ENCODE measurements at regions of chr12 and their contacts with region 1.

Region 1: DNA sequence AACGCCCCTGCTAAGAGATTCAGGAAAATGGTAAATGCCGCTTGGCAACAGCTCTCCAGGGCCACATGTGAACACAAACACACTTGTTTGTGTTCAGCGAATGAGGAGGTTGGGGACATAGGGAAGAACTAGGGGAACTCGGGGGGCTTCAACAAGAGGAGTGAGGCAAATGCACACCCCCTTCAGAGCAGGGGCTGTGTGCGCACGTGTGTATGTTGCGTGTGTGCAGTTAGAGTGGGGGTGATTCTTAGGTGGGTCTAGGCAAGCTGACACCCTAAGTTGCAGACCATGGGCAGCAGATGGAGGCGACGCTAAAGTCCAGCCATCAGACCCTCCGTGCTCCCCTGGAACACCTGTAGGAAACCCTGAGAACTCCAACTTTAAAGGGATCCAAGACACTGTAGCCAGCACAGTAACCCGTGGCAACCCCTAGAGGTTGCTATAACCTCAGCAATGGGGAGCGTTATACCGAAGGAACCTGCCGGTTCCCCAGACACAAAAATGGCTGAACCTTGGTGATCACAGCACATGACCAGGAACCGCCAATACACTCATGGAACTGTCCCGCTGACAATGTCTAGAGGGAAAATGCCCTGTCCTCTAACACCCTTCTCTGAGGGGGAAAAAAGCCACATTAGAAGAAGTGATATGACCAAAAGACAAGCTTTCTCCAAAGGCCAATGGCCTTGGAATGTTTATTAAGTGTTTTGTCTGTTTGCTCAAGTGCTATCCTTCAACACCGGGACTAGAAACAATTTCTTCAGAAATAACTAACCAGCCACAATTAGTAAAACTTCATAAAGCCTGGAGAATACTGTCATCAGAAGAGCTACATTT is 86.5 kb upstream of the CEP83 start:
- DNase-seq: peak in 1 of 3 donors; percentile 36
- ATAC-seq: peak; percentile 91 to 97
- H3K4me3 ChIP-seq: no peak overlapping the region
- H3K27ac ChIP-seq: no peak overlapping the region
- H3K4me1 ChIP-seq: no peaks in the 10 kb centered on the region
- H3K27me3 ChIP-seq: no peaks in the 10 kb centered on the region

Region 2: GRCh38 chr12:94603434-94604365 is 57.5 kb after region 1 on chr12:
- intact Hi-C with region 1: no loop called
- DNase-seq: peak; percentile 25 to 55 (median 50)
- ATAC-seq: peak in 1 of 2 donors; percentile 39
- H3K4me3 ChIP-seq: no peak overlapping the region
- H3K27ac ChIP-seq: no peak overlapping the region
- H3K4me1 ChIP-seq: peaks cover 2% of the 10 kb centered on the region
- H3K27me3 ChIP-seq: no peaks in the 10 kb centered on the region

Region 3: GRCh38 chr12:94725375-94726168 is 179.4 kb after region 1 on chr12:
- intact Hi-C with region 1: no loop called
- DNase-seq: peak in 1 of 3 donors; percentile 39
- ATAC-seq: peak; percentile 61 to 69
- H3K4me3 ChIP-seq: no peak overlapping the region
- H3K27ac ChIP-seq: no peak overlapping the region
- H3K4me1 ChIP-seq: peaks cover 2% of the 10 kb centered on the region
- H3K27me3 ChIP-seq: no peaks in the 10 kb centered on the region

Region 4: DNA sequence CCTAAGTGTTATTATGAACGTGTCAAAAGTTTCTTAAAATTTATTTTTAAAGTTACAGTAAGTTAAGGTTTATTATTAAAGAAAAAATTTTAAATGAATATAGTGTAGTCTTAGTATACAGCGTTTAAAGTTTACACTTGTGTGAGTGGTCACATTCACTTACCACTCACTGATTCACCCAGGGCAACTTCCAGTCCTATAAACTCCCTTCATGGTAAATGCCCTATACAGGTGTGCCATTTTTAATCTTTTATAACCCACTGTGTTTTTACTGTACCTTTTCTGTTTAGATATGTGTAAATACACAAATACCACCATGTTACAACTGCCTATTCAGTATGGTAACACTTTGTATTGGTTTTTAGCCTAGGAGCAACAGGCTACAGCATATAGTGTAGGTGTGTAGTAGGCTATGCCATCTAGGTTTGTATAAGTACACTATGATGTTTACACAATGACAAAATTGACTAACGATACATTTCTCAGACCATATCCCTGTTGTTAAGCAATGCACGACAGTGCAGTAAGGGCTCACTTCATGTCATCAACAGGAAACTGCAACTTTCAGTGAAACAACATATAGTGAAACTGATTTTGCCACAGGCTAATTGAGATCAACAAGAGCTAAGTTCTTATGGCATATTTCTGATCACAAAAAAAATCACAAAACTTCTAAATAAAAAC is 216.2 kb after region 1 on chr12:
- intact Hi-C with region 1: loop called (anchors 5 to 10 kb)
- DNase-seq: no peak
- ATAC-seq: no peak
- H3K4me3 ChIP-seq: no peak overlapping the region
- H3K27ac ChIP-seq: no peak overlapping the region
- H3K4me1 ChIP-seq: no peaks in the 10 kb centered on the region
- H3K27me3 ChIP-seq: no peaks in the 10 kb centered on the region

Region 5: GRCh38 chr12:94769047-94769420 is 222.9 kb after region 1 on chr12:
- intact Hi-C with region 1: loop called (anchors 5 to 10 kb)
- DNase-seq: no peak
- ATAC-seq: no peak
- H3K4me3 ChIP-seq: no peak overlapping the region
- H3K27ac ChIP-seq: no peak overlapping the region
- H3K4me1 ChIP-seq: no peaks in the 10 kb centered on the region
- H3K27me3 ChIP-seq: no peaks in the 10 kb centered on the region

Region 6: GRCh38 chr12:94941440-94941862 is 395.3 kb after region 1 on chr12:
- intact Hi-C with region 1: no loop called
- DNase-seq: peak; percentile 73 to 83 (median 82)
- ATAC-seq: peak; percentile 94 to 97
- H3K4me3 ChIP-seq: no peak overlapping the region
- H3K27ac ChIP-seq: peak overlapping the region; percentile 77
- H3K4me1 ChIP-seq: peaks cover 9% of the 10 kb centered on the region
- H3K27me3 ChIP-seq: no peaks in the 10 kb centered on the region